ENCODE measurements at regions of chr16 and their contacts with region 1.

Region 1: DNA sequence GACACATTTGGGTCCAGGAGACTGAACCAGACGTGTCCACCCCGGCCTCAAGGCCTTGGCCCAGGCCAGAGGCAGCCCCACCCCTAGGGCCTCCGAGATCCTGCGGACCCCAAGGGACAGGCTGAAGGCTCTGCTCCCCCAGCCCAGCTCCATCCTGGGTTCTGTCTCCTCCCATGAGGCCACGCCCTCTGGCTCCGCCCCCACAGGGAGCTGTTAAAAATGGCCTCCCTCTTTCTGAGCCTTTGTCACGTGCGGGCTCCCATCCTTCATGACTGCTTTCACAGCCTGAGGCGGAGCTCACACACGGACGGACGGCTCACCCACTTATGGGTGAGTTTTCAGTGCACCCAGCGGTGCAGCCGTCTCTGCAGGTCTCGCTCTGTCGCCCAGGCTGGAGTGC is 6.5 kb upstream of the CACNA1H start:
- DNase-seq: no peak

Region 2: GRCh38 chr16:832652-833336 is 313.6 kb before region 1 on chr16:
- in situ Hi-C with region 1: loop called (anchors 10 kb)
- DNase-seq: peak; percentile 28 to 41

Measured in T47D (cell line).